ENCODE measurements at regions of chr7 and their contacts with region 1.

Region 1: DNA sequence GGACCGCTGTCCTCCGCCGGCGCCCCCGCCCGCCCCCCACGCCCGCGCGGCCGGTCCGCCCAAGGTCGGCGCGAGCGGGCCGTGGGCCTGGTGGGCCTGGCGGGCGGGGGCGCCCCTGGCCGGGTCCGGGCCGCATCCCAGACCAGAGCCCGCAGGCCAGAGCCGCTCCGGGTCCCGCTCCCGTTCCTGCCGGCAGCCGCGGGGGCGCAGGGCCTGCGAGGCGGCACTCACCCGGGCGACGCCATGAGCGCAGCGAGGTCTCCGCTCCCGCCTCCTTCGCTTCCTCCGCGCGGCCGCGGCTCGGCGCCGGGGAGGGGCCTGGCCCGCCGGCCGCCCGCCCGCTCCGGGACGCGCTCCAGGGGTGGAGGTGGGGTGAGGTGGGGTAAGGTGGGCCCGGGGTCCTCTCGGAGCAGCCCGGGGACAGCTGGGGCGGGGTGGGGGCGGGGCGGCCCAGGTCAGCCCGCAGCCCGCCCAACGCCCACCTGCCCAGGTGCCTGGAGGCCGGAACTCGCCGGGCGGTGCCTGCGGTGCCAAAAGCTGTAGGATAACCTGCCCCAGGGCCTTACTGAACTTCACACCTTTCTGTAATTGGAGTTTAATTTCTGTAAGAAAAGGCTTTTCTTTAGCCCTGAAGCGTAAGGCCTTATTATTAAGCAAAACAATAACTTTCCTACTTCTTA is at the start of gene URGCP:
- DNase-seq: peak; percentile 30
- H3K4me3 ChIP-seq: peak within 1 kb of the TSS; percentile 58 to 92 (median 85)
- H3K27ac ChIP-seq: peak within 1 kb of the TSS; percentile 76
- H3K4me1 ChIP-seq: peaks cover 29% of the 10 kb centered on the region
- H3K27me3 ChIP-seq: no peaks in the 10 kb centered on the region
- CTCF ChIP-seq: no peak
- total RNA-seq, gene URGCP: 28.0 to 40.5 TPM

Region 2: DNA sequence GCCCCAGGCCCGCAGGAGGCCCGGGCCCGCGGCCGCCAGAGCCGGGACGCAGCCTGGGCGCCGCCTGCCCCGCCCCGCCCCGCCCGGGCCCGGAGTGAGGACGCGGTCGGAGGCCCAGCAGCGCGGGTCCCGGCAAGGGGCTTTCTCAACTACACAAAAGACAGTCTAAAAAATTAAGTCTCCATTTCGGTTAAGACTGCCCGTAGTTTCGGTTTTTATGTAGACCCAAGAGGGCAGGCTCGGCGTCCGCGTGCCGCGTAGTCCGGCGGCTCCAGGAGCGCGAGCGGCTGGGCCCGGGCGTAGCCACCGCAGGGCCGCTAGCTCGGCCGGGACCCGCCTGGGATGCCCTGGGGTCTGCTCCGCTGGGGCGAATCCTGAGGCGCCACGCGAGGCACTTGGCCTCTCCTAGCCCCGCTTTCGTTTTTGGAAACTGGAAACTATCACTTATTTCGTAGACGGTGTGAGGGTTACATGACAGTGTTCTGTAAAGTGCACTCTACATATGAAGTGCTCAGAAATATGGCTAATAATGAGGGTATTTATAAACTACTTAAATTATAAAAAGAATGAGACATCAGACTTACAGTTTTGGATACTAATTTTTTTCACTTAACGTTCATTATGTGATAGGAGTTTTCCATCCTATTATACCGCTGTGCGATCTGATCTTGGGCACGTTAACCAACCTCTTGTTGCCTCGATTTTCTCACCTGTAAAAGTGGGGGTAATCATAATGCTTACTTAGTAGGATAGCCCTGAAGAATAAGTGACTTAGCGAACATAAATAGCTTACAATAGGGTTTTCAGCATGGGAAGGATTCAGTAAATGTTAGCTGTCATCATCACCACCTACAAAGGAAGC is 147.4 kb before region 1 on chr7:
- CTCF ChIA-PET with region 1: no interaction called
- dilution Hi-C with region 1: no loop called
- in situ Hi-C with region 1: no loop called
- intact Hi-C with region 1: no loop called
- DNase-seq: peak; percentile 39
- H3K4me3 ChIP-seq: peak overlapping the region; percentile 75 to 89 (median 76)
- H3K27ac ChIP-seq: peak overlapping the region; percentile 48
- H3K4me1 ChIP-seq: peaks cover 25% of the 10 kb centered on the region
- H3K27me3 ChIP-seq: no peaks in the 10 kb centered on the region
- CTCF ChIP-seq: no peak

Region 3: GRCh38 chr7:43808135-43808809 is 98.2 kb before region 1 on chr7:
- CTCF ChIA-PET with region 1: no interaction called
- dilution Hi-C with region 1: loop called (anchors 5 kb)
- in situ Hi-C with region 1: no loop called
- intact Hi-C with region 1: no loop called
- DNase-seq: no peak
- H3K4me3 ChIP-seq: no peak overlapping the region
- H3K27ac ChIP-seq: no peak overlapping the region
- H3K4me1 ChIP-seq: no peaks in the 10 kb centered on the region
- H3K27me3 ChIP-seq: no peaks in the 10 kb centered on the region
- CTCF ChIP-seq: no peak

Region 4: GRCh38 chr7:43869006-43869866 is 37.2 kb before region 1 on chr7 and contains the start of gene MRPS24:
- CTCF ChIA-PET with region 1: no interaction called
- dilution Hi-C with region 1: no loop called
- in situ Hi-C with region 1: no loop called
- intact Hi-C with region 1: loop called (anchors 1 kb)
- DNase-seq: peak; percentile 90
- H3K4me3 ChIP-seq: peak within 1 kb of the TSS; percentile 64 to 99 (median 79)
- H3K27ac ChIP-seq: peak within 1 kb of the TSS; percentile 97
- H3K4me1 ChIP-seq: peaks cover 42% of the 10 kb centered on the region
- H3K27me3 ChIP-seq: no peaks in the 10 kb centered on the region
- CTCF ChIP-seq: no peak
- total RNA-seq, gene MRPS24: 49.0 to 114 TPM

Region 5: DNA sequence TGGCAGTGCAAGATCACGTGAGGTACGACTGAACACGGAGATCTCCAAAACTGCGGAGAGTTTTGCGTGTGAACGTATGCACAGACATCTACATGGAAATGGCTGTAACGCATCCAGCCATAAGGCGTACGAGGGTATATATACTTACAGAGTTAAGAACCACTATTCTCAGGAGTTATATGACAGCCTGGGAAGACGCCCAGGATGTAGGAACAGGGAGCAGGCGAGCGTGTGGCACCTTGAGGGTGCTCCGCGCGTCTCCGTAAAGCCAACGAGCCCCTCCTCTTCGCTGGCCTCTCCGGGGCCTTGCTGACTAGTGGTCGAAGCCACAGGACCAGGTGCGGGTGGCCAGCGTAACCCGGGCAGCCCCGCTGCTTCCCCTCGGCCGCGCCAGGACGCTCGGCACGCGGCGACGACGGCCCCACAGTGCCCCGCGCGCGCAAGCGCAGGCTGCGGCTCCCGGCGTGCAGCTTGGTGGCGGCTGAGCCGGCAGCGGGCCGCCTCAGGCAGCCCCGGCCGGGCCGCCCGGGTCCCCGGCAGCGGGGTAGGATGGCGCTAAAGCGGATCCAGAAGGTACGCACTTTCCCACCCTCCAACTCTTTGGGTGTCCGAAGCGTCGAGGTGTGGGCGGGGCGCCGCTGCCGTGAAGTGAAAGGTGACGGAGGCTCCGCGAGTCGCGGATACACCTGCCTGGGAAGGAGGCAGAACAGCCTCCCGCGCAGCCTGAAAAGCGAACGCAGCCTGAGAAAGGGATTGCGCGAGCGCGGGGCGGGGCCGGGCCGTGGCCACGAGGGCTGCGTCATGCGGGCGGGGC is 19.7 kb after region 1 on chr7 and contains the start of gene UBE2D4:
- CTCF ChIA-PET with region 1: no interaction called
- dilution Hi-C with region 1: no loop called
- in situ Hi-C with region 1: no loop called
- intact Hi-C with region 1: loop called (anchors 2 kb)
- DNase-seq: peak; percentile 83
- H3K4me3 ChIP-seq: peak within 1 kb of the TSS; percentile 62 to 73 (median 70)
- H3K27ac ChIP-seq: no peak within 1 kb of the TSS
- H3K4me1 ChIP-seq: peaks cover 9% of the 10 kb centered on the region
- H3K27me3 ChIP-seq: no peaks in the 10 kb centered on the region
- CTCF ChIP-seq: no peak
- total RNA-seq, gene UBE2D4: 3.9 to 7.7 TPM

Region 6: DNA sequence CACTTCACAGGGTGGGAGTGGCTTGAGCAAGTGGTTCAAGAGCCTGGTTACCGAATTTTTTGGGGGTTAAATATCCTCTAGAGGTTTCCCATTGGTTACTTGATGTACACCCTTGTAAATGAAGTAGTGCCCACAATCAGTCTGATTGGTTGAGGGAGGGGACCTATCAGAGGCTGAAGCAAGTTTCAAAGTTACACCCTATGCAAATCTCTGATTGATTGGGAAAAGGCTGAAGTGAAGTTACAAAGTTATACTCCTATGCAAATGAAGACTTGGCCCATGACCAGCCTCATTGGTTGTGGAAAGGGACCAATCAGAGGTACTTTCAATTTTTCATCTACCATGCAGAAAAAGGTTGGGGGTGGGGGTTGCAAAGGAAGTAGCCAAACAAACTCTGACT is 54.5 kb after region 1 on chr7:
- CTCF ChIA-PET with region 1: no interaction called
- dilution Hi-C with region 1: no loop called
- in situ Hi-C with region 1: no loop called
- intact Hi-C with region 1: no loop called
- DNase-seq: no peak
- H3K4me3 ChIP-seq: no peak overlapping the region
- H3K27ac ChIP-seq: no peak overlapping the region
- H3K4me1 ChIP-seq: no peaks in the 10 kb centered on the region
- H3K27me3 ChIP-seq: no peaks in the 10 kb centered on the region
- CTCF ChIP-seq: no peak

Region 7: DNA sequence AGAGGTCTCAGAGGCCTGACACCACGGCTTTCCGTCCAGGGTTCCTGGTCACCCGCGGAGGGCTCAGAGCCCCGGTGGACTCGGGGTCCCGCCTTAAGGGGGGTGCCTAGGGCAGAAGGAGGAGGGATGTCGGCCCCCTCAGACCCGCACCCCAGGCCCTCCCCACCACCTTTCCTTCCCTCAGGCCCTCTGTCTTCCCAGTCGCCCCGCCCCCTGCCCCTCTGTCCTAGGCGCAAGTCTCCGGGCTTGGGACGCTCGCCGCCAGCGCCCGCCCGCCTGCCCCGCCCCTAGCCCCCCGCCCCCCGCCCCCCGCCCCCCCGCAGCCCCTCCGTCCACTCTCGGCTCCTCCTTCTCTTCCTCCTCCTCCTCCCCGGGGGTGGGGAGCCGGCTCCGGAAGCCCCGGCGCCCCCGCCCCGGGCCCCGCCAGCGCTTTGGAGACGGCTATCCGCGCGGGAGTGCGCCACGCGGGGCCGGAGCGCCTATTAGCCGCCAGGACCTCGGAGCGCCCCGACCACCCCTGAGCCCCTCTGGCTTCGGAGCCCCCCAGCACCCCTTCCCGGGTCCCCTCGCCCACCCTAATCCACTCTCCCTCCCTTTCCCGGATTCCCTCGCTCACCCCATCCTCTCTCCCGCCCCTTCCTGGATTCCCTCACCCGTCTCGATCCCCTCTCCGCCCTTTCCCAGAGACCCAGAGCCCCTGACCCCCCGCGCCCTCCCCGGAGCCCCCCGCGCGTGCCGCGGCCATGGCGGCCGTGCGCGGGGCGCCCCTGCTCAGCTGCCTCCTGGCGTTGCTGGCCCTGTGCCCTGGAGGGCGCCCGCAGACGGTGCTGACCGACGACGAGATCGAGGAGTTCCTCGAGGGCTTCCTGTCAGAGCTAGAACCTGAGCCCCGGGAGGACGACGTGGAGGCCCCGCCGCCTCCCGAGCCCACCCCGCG is 197.7 kb after region 1 on chr7 and contains the start of gene AEBP1:
- CTCF ChIA-PET with region 1: no interaction called
- dilution Hi-C with region 1: no loop called
- in situ Hi-C with region 1: no loop called
- intact Hi-C with region 1: no loop called
- DNase-seq: no peak
- H3K4me3 ChIP-seq: no peak within 1 kb of the TSS
- H3K27ac ChIP-seq: no peak within 1 kb of the TSS
- H3K4me1 ChIP-seq: peaks cover 22% of the 10 kb centered on the region
- H3K27me3 ChIP-seq: no peaks in the 10 kb centered on the region
- CTCF ChIP-seq: no peak
- total RNA-seq, gene AEBP1: 0.24 to 16.7 TPM